ENCODE measurements at regions of chr12 and their contacts with region 1.

Region 1: GRCh38 chr12:15532364-15532977 is 210.2 kb downstream of the PTPRO start:
- DNase-seq: peak; percentile 65
- H3K4me3 Mint-ChIP-seq: no peak overlapping the region
- H3K27ac Mint-ChIP-seq: peak overlapping the region; percentile 60
- H3K4me1 Mint-ChIP-seq: no peaks in the 10 kb centered on the region
- H3K27me3 Mint-ChIP-seq: peaks cover 4% of the 10 kb centered on the region

Region 2: GRCh38 chr12:15276088-15276698 is 256.3 kb before region 1 on chr12:
- CTCF ChIA-PET with region 1: interaction called, 13 read pairs
- DNase-seq: no peak
- H3K4me3 Mint-ChIP-seq: no peak overlapping the region
- H3K27ac Mint-ChIP-seq: no peak overlapping the region
- H3K4me1 Mint-ChIP-seq: peaks cover 9% of the 10 kb centered on the region
- H3K27me3 Mint-ChIP-seq: no peaks in the 10 kb centered on the region

Region 3: DNA sequence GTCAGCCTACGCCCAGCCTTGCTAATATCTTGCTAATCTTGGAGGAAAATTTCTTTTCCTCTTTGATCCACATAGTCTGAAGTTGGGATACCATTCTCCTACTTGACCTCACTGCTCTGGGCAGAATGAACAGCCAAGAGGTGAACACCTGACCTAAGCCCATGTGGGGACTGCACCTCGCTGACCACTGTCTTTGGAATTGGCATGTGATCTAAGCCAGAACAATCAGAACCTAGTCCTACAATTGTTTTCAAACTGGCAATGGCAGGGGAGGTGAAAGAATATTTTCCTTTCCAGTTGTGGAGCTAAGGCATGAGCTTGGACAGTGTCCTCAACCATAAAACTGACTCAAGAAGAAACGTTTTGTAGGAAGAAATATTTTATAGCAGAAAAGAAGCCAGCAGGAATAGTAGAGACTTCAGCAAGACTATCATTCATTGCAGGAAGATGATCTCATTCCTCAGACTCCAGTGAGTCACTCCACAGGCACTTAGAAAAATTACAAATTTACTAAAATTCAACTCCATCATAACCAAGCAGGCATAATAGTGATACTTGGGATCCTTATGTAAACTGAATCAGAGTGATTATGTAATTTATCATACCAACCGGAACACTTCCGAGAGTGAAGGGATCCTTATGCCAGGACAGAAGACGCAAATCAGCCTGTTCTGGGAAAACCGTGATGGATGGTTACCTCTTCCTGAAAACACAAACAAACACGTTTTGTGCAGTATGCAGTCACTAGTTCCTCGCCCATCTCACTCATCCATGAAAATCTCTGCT is 195.5 kb before region 1 on chr12:
- CTCF ChIA-PET with region 1: no interaction called
- DNase-seq: no peak
- H3K4me3 Mint-ChIP-seq: no peak overlapping the region
- H3K27ac Mint-ChIP-seq: no peak overlapping the region
- H3K4me1 Mint-ChIP-seq: no peaks in the 10 kb centered on the region
- H3K27me3 Mint-ChIP-seq: peaks cover 16% of the 10 kb centered on the region

Region 4: GRCh38 chr12:15453613-15454012 is 78.9 kb before region 1 on chr12:
- CTCF ChIA-PET with region 1: no interaction called
- DNase-seq: no peak
- H3K4me3 Mint-ChIP-seq: no peak overlapping the region
- H3K27ac Mint-ChIP-seq: no peak overlapping the region
- H3K4me1 Mint-ChIP-seq: peaks cover 11% of the 10 kb centered on the region
- H3K27me3 Mint-ChIP-seq: peaks cover 4% of the 10 kb centered on the region

Region 5: GRCh38 chr12:15546102-15546701 is 13.7 kb after region 1 on chr12:
- CTCF ChIA-PET with region 1: interaction called, 13 read pairs
- DNase-seq: peak; percentile 58
- H3K4me3 Mint-ChIP-seq: peak overlapping the region; percentile 69
- H3K27ac Mint-ChIP-seq: peak overlapping the region; percentile 100
- H3K4me1 Mint-ChIP-seq: peaks cover 75% of the 10 kb centered on the region
- H3K27me3 Mint-ChIP-seq: no peaks in the 10 kb centered on the region

Region 6: GRCh38 chr12:15563663-15564062 is 31.2 kb after region 1 on chr12:
- CTCF ChIA-PET with region 1: interaction called, 24 read pairs
- DNase-seq: peak; percentile 45
- H3K4me3 Mint-ChIP-seq: peak overlapping the region; percentile 58
- H3K27ac Mint-ChIP-seq: peak overlapping the region; percentile 94
- H3K4me1 Mint-ChIP-seq: peaks cover 77% of the 10 kb centered on the region
- H3K27me3 Mint-ChIP-seq: peaks cover 4% of the 10 kb centered on the region

Region 7: GRCh38 chr12:15575671-15576541 is 43.4 kb after region 1 on chr12:
- CTCF ChIA-PET with region 1: interaction called, 527 read pairs
- DNase-seq: no peak
- H3K4me3 Mint-ChIP-seq: no peak overlapping the region
- H3K27ac Mint-ChIP-seq: no peak overlapping the region
- H3K4me1 Mint-ChIP-seq: peaks cover 41% of the 10 kb centered on the region
- H3K27me3 Mint-ChIP-seq: no peaks in the 10 kb centered on the region

Region 8: GRCh38 chr12:15590180-15590826 is 57.8 kb after region 1 on chr12:
- CTCF ChIA-PET with region 1: interaction called, 527 read pairs
- DNase-seq: peak; percentile 58
- H3K4me3 Mint-ChIP-seq: peak overlapping the region; percentile 16
- H3K27ac Mint-ChIP-seq: no peak overlapping the region
- H3K4me1 Mint-ChIP-seq: peaks cover 12% of the 10 kb centered on the region
- H3K27me3 Mint-ChIP-seq: no peaks in the 10 kb centered on the region

Measured in activated naive CD4-positive, alpha-beta T cell treated with anti-CD3 and anti-CD28 coated beads, Interleukin-2, amount 10 ng/mL, durations not matched to agents 7 days and 5 days (primary cell).